Ascending aorta (tissue), 2 donors: ENCODE measurements at regions of chr9 and their contacts with region 1.

Region 1: GRCh38 chr9:70392189-70392588 is 22.3 kb downstream of the KLF9 start:
- DNase-seq: no peak
- H3K4me3 ChIP-seq: peak overlapping the region in 1 of 2 donors; percentile 6
- H3K27ac ChIP-seq: no peak overlapping the region
- H3K4me1 ChIP-seq: peaks cover 20 to 66% of the 10 kb centered on the region in 2 donors
- H3K27me3 ChIP-seq: no peaks in the 10 kb centered on the region
- CTCF ChIP-seq: peak; percentile 7 to 21 (median 15)

Region 2: GRCh38 chr9:70352802-70353201 is 39.4 kb before region 1 on chr9:
- intact Hi-C with region 1: loop called (anchors 5 kb)
- DNase-seq: no peak
- H3K4me3 ChIP-seq: no peak overlapping the region
- H3K27ac ChIP-seq: peak overlapping the region in 1 of 2 donors; percentile 14
- H3K4me1 ChIP-seq: no peaks in the 10 kb centered on the region
- H3K27me3 ChIP-seq: no peaks in the 10 kb centered on the region
- CTCF ChIP-seq: peak; percentile 44 to 67 (median 61)

Region 3: DNA sequence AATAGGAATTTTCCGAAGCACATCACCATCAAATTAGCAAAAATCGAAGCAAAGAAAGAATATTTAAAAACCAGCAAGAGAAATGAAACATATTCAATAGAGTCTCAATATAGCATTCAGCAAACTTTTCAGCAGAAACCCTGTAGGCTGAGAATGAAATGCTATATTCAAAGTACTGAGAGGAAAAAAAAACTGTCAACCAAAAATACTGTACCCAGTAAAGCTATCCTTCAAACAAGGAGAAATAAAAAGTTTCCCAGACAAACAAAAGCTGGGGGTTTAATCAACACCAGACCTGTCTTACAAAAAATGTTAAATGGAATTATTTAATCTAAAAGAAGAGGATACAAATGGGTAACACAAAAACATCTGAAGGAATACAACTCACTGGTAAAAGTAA is 613.3 kb after region 1 on chr9:
- intact Hi-C with region 1: no loop called
- DNase-seq: no peak
- H3K4me3 ChIP-seq: no peak overlapping the region
- H3K27ac ChIP-seq: no peak overlapping the region
- H3K4me1 ChIP-seq: no peaks in the 10 kb centered on the region
- H3K27me3 ChIP-seq: no peaks in the 10 kb centered on the region
- CTCF ChIP-seq: no peak